ENCODE measurements at regions of chr19 and their contacts with region 1.

Region 1: DNA sequence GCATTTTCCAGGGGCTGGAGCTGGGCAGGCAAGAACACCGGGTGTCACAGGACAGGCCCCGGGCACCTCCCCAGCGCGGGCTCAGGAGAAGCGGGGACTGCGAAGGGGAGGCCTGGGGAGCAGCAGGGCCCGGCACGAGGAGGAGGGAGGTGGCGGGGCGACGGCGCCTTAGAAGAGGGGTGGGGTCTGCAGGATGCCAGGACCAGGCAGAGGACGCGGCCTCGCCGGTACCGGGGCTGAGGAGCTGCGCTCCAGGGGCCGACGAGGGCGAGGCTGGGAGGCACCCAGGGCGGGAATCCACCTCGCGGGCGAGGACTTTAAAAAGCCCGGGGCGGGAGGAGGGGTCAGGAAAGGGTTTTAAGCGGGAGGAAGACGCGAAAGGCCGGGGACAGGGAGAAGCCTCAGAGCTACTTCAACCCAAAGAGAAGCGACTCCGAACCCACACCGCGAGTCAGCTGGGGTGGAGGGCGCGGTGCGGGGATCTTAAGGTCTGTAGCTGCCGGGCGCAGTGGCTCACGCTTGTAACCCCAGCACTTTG is 665 bp downstream of the ZNF347 start:
- DNase-seq: peak; percentile 64
- ATAC-seq: peak; percentile 36
- H3K4me3 Mint-ChIP-seq: peak overlapping the region; percentile 72
- H3K27ac Mint-ChIP-seq: peak overlapping the region; percentile 74
- H3K4me1 Mint-ChIP-seq: peaks cover 14% of the 10 kb centered on the region
- H3K27me3 Mint-ChIP-seq: no peaks in the 10 kb centered on the region

Region 2: GRCh38 chr19:52570000-52570861 is 588.0 kb before region 1 on chr19 and contains the start of gene ZNF701:
- CTCF ChIA-PET with region 1: no interaction called
- POLR2A ChIA-PET with region 1: no interaction called
- intact Hi-C with region 1: loop called in 1 of 2 experiments (anchors 1 kb)
- DNase-seq: peak; percentile 98
- ATAC-seq: peak; percentile 99
- H3K4me3 Mint-ChIP-seq: peak within 1 kb of the TSS; percentile 88
- H3K27ac Mint-ChIP-seq: peak within 1 kb of the TSS; percentile 96
- H3K4me1 Mint-ChIP-seq: peaks cover 27% of the 10 kb centered on the region
- H3K27me3 Mint-ChIP-seq: no peaks in the 10 kb centered on the region
- total RNA-seq, gene ZNF701: 19.0 to 21.5 TPM

Region 3: GRCh38 chr19:52622261-52622660 is 535.9 kb before region 1 on chr19:
- CTCF ChIA-PET with region 1: no interaction called
- POLR2A ChIA-PET with region 1: no interaction called
- intact Hi-C with region 1: no loop called
- DNase-seq: no peak
- ATAC-seq: no peak
- H3K4me3 Mint-ChIP-seq: no peak overlapping the region
- H3K27ac Mint-ChIP-seq: no peak overlapping the region
- H3K4me1 Mint-ChIP-seq: peaks cover 6% of the 10 kb centered on the region
- H3K27me3 Mint-ChIP-seq: no peaks in the 10 kb centered on the region

Region 4: DNA sequence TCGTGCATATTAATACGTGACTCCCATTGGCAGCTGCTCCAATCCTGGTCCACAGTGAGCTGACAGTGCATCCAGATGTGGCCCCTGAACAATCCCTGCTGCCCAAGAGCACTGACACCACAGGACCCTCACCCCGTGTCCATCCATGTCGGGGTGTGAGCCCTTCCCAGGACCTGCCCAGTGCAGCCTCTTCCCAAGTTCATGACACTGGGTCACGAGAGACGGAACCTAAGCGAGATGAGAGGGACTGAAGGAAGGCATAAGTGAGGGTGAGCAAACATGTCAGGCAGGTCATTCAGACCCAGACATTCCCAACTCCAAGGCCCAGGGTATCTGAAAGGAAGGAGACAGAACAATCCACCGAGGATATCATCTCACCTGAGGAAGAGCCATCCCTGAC is 304.3 kb before region 1 on chr19:
- CTCF ChIA-PET with region 1: no interaction called
- POLR2A ChIA-PET with region 1: no interaction called
- intact Hi-C with region 1: loop called in 1 of 2 experiments (anchors 2 kb)
- DNase-seq: no peak
- ATAC-seq: no peak
- H3K4me3 Mint-ChIP-seq: no peak overlapping the region
- H3K27ac Mint-ChIP-seq: no peak overlapping the region
- H3K4me1 Mint-ChIP-seq: peaks cover 23% of the 10 kb centered on the region
- H3K27me3 Mint-ChIP-seq: no peaks in the 10 kb centered on the region

Region 5: GRCh38 chr19:53132141-53132991 is 25.8 kb before region 1 on chr19 and contains the start of gene ZNF415:
- CTCF ChIA-PET with region 1: no interaction called
- POLR2A ChIA-PET with region 1: no interaction called
- intact Hi-C with region 1: loop called in 1 of 2 experiments (anchors 1 kb)
- DNase-seq: peak; percentile 89
- ATAC-seq: peak; percentile 94
- H3K4me3 Mint-ChIP-seq: peak within 1 kb of the TSS; percentile 75
- H3K27ac Mint-ChIP-seq: peak within 1 kb of the TSS; percentile 68
- H3K4me1 Mint-ChIP-seq: peaks cover 20% of the 10 kb centered on the region
- H3K27me3 Mint-ChIP-seq: peaks cover 10% of the 10 kb centered on the region
- total RNA-seq, gene ZNF415: 3.2 to 3.3 TPM

Region 6: DNA sequence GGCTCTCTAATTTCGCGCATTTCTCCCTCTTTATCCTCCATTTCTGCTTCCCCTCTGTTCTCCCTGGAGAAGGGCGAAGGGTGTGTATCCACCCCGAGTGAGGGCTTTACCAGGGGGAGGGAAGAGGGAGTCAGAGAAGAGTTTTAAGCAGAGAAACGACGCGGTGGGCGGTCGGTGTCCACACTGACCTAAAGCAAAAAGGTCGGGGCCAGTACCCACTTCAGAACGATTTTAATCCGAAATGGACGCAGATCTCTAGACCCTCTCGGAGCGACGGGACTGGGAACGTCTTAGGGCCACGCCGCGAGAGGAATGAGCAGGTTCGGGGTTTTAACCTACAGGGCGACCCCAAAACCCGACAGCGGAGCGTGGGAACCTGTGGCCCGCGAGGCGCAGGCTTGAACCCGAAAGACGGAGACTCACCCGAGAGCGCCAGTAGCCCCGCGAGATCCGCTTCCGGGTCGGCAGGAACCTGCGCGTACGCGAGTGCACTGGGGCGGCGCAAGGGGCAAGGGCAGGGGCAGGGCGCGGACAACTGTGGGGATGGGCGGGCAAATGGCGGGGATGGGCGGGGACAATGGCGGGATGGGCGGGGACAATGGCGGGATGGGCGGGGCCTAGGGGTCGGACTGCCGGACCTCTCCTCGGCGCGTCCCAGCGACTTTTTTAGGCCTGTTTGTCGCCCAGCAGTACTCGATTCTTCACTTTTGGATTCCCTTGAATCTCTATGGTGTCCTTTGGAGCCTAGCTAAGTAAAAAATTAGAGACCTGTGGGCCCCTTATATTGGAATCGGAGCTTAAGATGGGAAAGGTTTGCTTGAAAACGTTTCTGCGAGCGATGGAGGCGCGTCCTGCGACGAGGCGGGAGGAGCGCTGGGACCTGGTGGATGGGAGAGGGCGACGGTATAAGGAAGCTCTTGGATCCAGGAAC is 96.5 kb after region 1 on chr19 and contains the start of gene ZNF677:
- CTCF ChIA-PET with region 1: no interaction called
- POLR2A ChIA-PET with region 1: no interaction called
- intact Hi-C with region 1: loop called in 1 of 2 experiments (anchors 1 kb)
- DNase-seq: peak; percentile 92
- ATAC-seq: peak; percentile 100
- H3K4me3 Mint-ChIP-seq: peak within 1 kb of the TSS; percentile 84
- H3K27ac Mint-ChIP-seq: peak within 1 kb of the TSS; percentile 53
- H3K4me1 Mint-ChIP-seq: peaks cover 10% of the 10 kb centered on the region
- H3K27me3 Mint-ChIP-seq: no peaks in the 10 kb centered on the region
- total RNA-seq, gene ZNF677: 6.4 to 7.5 TPM

Region 7: GRCh38 chr19:53357821-53358581 is 199.8 kb after region 1 on chr19:
- CTCF ChIA-PET with region 1: no interaction called
- POLR2A ChIA-PET with region 1: no interaction called
- intact Hi-C with region 1: no loop called
- DNase-seq: peak; percentile 10
- ATAC-seq: no peak
- H3K4me3 Mint-ChIP-seq: no peak overlapping the region
- H3K27ac Mint-ChIP-seq: no peak overlapping the region
- H3K4me1 Mint-ChIP-seq: no peaks in the 10 kb centered on the region
- H3K27me3 Mint-ChIP-seq: no peaks in the 10 kb centered on the region

Region 8: GRCh38 chr19:53394974-53395839 is 237.0 kb after region 1 on chr19 and contains the start of gene ZNF765:
- CTCF ChIA-PET with region 1: no interaction called
- POLR2A ChIA-PET with region 1: no interaction called
- intact Hi-C with region 1: loop called in 1 of 2 experiments (anchors 1 kb)
- DNase-seq: peak; percentile 98
- ATAC-seq: peak; percentile 99
- H3K4me3 Mint-ChIP-seq: peak within 1 kb of the TSS; percentile 84
- H3K27ac Mint-ChIP-seq: peak within 1 kb of the TSS; percentile 89
- H3K4me1 Mint-ChIP-seq: peaks cover 25% of the 10 kb centered on the region
- H3K27me3 Mint-ChIP-seq: no peaks in the 10 kb centered on the region
- total RNA-seq, gene ZNF765: 10.7 to 10.9 TPM

Region 9: GRCh38 chr19:53467485-53468262 is 309.5 kb after region 1 on chr19 and contains the start of gene ZNF813:
- CTCF ChIA-PET with region 1: no interaction called
- POLR2A ChIA-PET with region 1: no interaction called
- intact Hi-C with region 1: loop called in 1 of 2 experiments (anchors 1 kb)
- DNase-seq: peak; percentile 98
- ATAC-seq: peak; percentile 98
- H3K4me3 Mint-ChIP-seq: peak within 1 kb of the TSS; percentile 80
- H3K27ac Mint-ChIP-seq: peak within 1 kb of the TSS; percentile 87
- H3K4me1 Mint-ChIP-seq: peaks cover 20% of the 10 kb centered on the region
- H3K27me3 Mint-ChIP-seq: peaks cover 9% of the 10 kb centered on the region
- total RNA-seq, gene ZNF813: 5.8 to 7.4 TPM

Measured in activated CD4-positive, alpha-beta T cell treated with anti-CD3 and anti-CD28 coated beads for 36 hours (primary cell).